Activated CD4-positive, alpha-beta memory T cell treated with anti-CD3 and anti-CD28 coated beads, Interleukin-2, amount 10 ng/mL, durations not matched to agents 7 days and 5 days (primary cell): ENCODE measurements at regions of chr1 and their contacts with region 1.

Region 1: GRCh38 chr1:31815752-31816500 is at the start of gene SPOCD1:
- DNase-seq: peak; percentile 90
- H3K4me3 Mint-ChIP-seq: no peak within 1 kb of the TSS
- H3K27ac Mint-ChIP-seq: no peak within 1 kb of the TSS
- H3K4me1 Mint-ChIP-seq: peaks cover 10% of the 10 kb centered on the region
- H3K27me3 Mint-ChIP-seq: no peaks in the 10 kb centered on the region
- total RNA-seq, gene SPOCD1: 0.08 to 0.15 TPM

Region 2: GRCh38 chr1:31762726-31763670 is 52.9 kb before region 1 on chr1:
- CTCF ChIA-PET with region 1: no interaction called
- POLR2A ChIA-PET with region 1: no interaction called
- DNase-seq: peak; percentile 67
- H3K4me3 Mint-ChIP-seq: peak overlapping the region; percentile 59
- H3K27ac Mint-ChIP-seq: no peak overlapping the region
- H3K4me1 Mint-ChIP-seq: peaks cover 29% of the 10 kb centered on the region
- H3K27me3 Mint-ChIP-seq: peaks cover 60% of the 10 kb centered on the region

Region 3: GRCh38 chr1:31805318-31805717 is 10.6 kb before region 1 on chr1:
- CTCF ChIA-PET with region 1: interaction called, 10 read pairs
- POLR2A ChIA-PET with region 1: no interaction called
- DNase-seq: no peak
- H3K4me3 Mint-ChIP-seq: no peak overlapping the region
- H3K27ac Mint-ChIP-seq: no peak overlapping the region
- H3K4me1 Mint-ChIP-seq: peaks cover 1% of the 10 kb centered on the region
- H3K27me3 Mint-ChIP-seq: peaks cover 26% of the 10 kb centered on the region

Region 4: GRCh38 chr1:31837451-31838158 is 21.7 kb after region 1 on chr1:
- CTCF ChIA-PET with region 1: interaction called, 14 read pairs
- POLR2A ChIA-PET with region 1: no interaction called
- DNase-seq: no peak
- H3K4me3 Mint-ChIP-seq: no peak overlapping the region
- H3K27ac Mint-ChIP-seq: no peak overlapping the region
- H3K4me1 Mint-ChIP-seq: peaks cover 16% of the 10 kb centered on the region
- H3K27me3 Mint-ChIP-seq: peaks cover 5% of the 10 kb centered on the region

Region 5: DNA sequence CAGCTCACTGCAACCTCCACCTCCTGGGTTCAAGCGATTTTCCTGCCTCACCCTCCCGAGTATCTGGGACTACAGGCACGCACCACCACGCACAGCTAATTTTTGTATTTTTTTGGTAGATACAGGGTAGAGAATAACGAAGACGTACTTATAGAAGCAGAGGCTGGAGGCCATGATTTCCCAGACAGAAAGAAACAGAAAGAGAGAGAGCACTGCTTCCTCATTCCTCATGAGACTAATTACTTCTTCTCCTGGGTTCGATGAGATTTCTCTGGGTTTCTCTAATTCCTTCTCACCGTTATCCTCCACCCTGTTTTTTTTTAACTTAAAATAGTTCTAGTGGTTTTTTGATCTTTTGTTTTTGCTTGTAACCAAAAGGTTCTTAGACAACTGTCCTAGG is 145.6 kb after region 1 on chr1:
- CTCF ChIA-PET with region 1: interaction called, 85 read pairs
- POLR2A ChIA-PET with region 1: interaction called, 10 read pairs
- DNase-seq: no peak
- H3K4me3 Mint-ChIP-seq: no peak overlapping the region
- H3K27ac Mint-ChIP-seq: peak overlapping the region; percentile 64
- H3K4me1 Mint-ChIP-seq: peaks cover 71% of the 10 kb centered on the region
- H3K27me3 Mint-ChIP-seq: no peaks in the 10 kb centered on the region

Region 6: DNA sequence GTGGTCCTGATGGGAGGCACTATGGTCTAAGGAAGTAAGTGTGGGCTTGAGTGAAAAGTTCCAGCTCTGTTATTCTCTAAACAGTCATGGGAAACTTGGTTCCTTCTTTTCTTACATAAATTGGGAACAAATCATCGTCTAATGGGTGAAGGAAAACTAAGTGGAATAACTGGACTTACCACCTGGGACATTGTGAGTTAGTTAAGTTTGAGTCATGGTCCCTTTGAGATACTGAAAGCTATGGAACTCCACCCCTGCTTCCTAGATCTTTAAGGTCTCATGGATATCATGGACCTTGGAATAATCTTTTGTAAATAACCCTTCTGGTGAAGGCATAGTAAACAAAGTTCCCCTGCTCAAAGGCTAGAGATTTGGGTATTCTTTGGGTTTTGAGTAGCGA is 347.5 kb after region 1 on chr1:
- CTCF ChIA-PET with region 1: no interaction called
- POLR2A ChIA-PET with region 1: no interaction called
- DNase-seq: no peak
- H3K4me3 Mint-ChIP-seq: no peak overlapping the region
- H3K27ac Mint-ChIP-seq: no peak overlapping the region
- H3K4me1 Mint-ChIP-seq: peaks cover 5% of the 10 kb centered on the region
- H3K27me3 Mint-ChIP-seq: no peaks in the 10 kb centered on the region